Calu3 (cell line): ENCODE measurements at regions of chr14 and their contacts with region 1.

Region 1: GRCh38 chr14:29222671-29223268 is 456.2 kb downstream of the FOXG1 start:
- DNase-seq: peak; percentile 7
- H3K4me3 Mint-ChIP-seq: no peak overlapping the region
- H3K27ac Mint-ChIP-seq: no peak overlapping the region
- H3K4me1 Mint-ChIP-seq: no peaks in the 10 kb centered on the region
- H3K27me3 Mint-ChIP-seq: peaks cover 12% of the 10 kb centered on the region
- CTCF ChIP-seq: peak; percentile 27

Region 2: GRCh38 chr14:29521526-29522137 is 298.9 kb after region 1 on chr14:
- CTCF ChIA-PET with region 1: no interaction called
- intact Hi-C with region 1: loop called (anchors 10 kb)
- DNase-seq: peak; percentile 41
- H3K4me3 Mint-ChIP-seq: no peak overlapping the region
- H3K27ac Mint-ChIP-seq: no peak overlapping the region
- H3K4me1 Mint-ChIP-seq: no peaks in the 10 kb centered on the region
- H3K27me3 Mint-ChIP-seq: no peaks in the 10 kb centered on the region
- CTCF ChIP-seq: peak; percentile 28